Heart left ventricle (tissue), 16 donors: ENCODE measurements at regions of chr15 and their contacts with region 1.

Region 1: DNA sequence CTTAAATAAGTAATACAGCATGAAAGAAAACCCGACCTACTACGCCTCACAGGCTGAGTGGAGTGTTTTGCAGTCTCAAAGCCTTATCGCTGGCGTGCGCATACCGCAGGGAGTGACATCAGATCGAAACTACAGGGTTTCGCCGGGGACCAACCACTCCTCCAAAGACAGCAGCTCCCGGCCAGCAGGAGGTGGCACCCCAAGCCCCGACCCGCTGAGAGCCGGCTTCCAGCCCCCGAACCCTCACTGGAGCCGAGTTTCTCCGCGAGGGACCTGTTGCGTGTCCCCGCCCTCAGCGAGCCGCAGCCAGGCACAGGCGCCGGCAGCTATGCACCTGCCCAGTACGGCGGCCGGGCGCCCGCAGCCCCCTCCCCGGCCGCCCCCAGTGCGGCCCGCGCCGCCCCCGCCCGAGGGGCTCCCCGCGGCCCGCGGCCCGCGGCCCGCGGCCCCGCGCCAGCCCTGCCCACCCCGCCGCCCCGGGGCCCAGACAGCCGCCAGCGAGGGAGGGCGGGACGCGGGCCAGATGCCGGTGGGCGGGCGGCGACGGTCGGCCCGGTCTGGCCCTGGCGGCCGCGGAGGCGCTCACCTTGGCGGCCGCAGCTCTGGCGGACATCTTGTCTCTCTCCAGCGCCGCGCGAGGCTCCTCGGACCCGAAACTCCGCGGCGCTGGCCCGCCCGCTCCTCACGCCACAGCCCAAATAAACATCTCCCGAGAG is 694 bp downstream of the TJP1 start:
- DNase-seq: peak; percentile 79 to 89 (median 81)
- ATAC-seq: peak; percentile 66 to 84 (median 70)
- H3K4me3 ChIP-seq: peak overlapping the region; percentile 60 to 97 (median 84)
- H3K27ac ChIP-seq: peak overlapping the region; percentile 97 to 100 (median 99)
- H3K4me1 ChIP-seq: peaks cover 2 to 46% (median 20%) of the 10 kb centered on the region in 12 donors
- H3K27me3 ChIP-seq: peaks cover 0 to 42% (median 0%) of the 10 kb centered on the region in 9 donors
- CTCF ChIP-seq: peak in 8 of 12 donors; percentile 10 to 50 (median 30)
- POLR2A ChIP-seq: peak in 1 of 2 donors; percentile 37

Region 2: GRCh38 chr15:29747837-29748417 is 73.6 kb before region 1 on chr15:
- intact Hi-C with region 1: loop called in 3 of 10 experiments (anchors 5 kb)
- DNase-seq: no peak
- ATAC-seq: no peak
- H3K4me3 ChIP-seq: no peak overlapping the region
- H3K27ac ChIP-seq: no peak overlapping the region
- H3K4me1 ChIP-seq: peaks cover 0 to 15% (median 6%) of the 10 kb centered on the region in 12 donors
- H3K27me3 ChIP-seq: no peaks in the 10 kb centered on the region
- CTCF ChIP-seq: peak in 11 of 12 donors; percentile 26 to 67 (median 50)
- POLR2A ChIP-seq: no peak

Region 3: GRCh38 chr15:29756358-29757267 is 65.0 kb before region 1 on chr15:
- intact Hi-C with region 1: loop called in 5 of 10 experiments (anchors 5 to 10 kb)
- DNase-seq: no peak
- ATAC-seq: peak in 3 of 4 donors; percentile 44 to 49 (median 45)
- H3K4me3 ChIP-seq: no peak overlapping the region
- H3K27ac ChIP-seq: peak overlapping the region in 5 of 12 donors; percentile 0 to 45 (median 11)
- H3K4me1 ChIP-seq: peaks cover 10 to 46% (median 27%) of the 10 kb centered on the region in 12 donors
- H3K27me3 ChIP-seq: no peaks in the 10 kb centered on the region
- CTCF ChIP-seq: no peak
- POLR2A ChIP-seq: no peak

Region 4: DNA sequence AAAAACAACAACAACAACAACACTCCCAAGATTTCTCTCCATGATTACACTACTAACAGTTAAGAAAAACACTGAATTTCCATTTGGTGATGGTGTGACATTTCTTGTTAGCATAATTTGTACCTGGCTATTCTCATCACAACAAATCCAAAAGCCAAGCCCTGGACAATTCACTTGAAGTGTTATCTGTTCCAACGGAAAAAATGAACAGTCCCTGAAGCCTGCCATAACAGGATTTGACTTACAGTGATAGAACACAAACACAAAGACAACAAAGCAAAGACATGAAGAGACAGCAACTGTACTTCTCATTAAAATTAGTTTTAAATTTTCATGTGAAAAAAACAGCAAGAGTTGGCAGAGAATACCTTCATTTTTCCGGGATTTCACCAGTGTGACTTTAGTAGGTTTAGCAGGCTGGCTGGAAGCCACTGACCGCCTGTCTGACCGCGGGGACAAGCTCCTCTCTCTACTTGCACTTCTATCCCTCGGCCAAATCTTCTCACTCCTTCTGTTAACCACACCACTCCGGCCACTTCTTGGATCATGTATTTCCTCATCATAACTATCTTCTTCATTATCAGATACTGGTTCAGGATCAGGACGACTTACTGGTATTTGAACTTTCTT is 55.6 kb before region 1 on chr15:
- intact Hi-C with region 1: loop called in 4 of 10 experiments (anchors 5 to 10 kb)
- DNase-seq: peak in 3 of 5 donors; percentile 25 to 34 (median 25)
- ATAC-seq: peak; percentile 33 to 86 (median 61)
- H3K4me3 ChIP-seq: no peak overlapping the region
- H3K27ac ChIP-seq: peak overlapping the region in 4 of 12 donors; percentile 13 to 42 (median 32)
- H3K4me1 ChIP-seq: peaks cover 0 to 38% (median 27%) of the 10 kb centered on the region in 12 donors
- H3K27me3 ChIP-seq: no peaks in the 10 kb centered on the region
- CTCF ChIP-seq: no peak
- POLR2A ChIP-seq: no peak

Region 5: DNA sequence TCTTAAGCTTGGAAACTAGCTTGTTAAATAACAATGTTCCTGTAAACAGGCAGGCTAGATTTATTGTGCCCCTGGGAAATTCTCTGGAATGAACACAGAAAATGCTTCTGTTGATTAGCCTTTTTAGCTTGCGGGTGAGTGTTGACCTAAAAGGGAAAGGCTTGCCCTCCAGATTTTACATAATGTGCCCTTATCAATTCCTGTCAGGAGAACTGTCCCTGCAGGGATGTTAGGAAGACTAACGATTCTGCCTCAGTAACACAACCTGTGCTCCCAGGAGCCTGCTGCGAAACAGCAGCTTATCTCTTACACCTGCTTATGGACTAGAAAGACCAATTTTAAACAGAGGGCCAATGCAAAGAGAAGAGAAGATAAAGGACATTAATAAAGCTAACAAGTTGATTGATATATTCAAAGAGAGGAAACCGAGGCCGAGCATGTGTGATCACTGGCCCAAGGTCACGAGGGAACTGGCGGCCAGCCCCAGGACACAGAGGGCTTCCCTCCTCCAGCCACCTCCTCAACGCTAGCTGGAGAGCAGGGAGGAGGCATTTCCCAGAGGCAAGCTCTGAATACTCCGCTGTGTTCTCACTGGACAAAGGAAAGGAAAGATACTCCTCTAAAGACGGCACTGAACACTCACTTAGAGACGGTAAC is 49.0 kb after region 1 on chr15:
- intact Hi-C with region 1: loop called in 5 of 10 experiments (anchors 2 to 5 kb)
- DNase-seq: peak in 4 of 5 donors; percentile 52 to 67 (median 58)
- ATAC-seq: peak; percentile 69 to 86 (median 74)
- H3K4me3 ChIP-seq: peak overlapping the region in 6 of 12 donors; percentile 3 to 32 (median 20)
- H3K27ac ChIP-seq: peak overlapping the region; percentile 56 to 89 (median 77)
- H3K4me1 ChIP-seq: peaks cover 0 to 48% (median 33%) of the 10 kb centered on the region in 12 donors
- H3K27me3 ChIP-seq: no peaks in the 10 kb centered on the region
- CTCF ChIP-seq: no peak
- POLR2A ChIP-seq: no peak

Region 6: DNA sequence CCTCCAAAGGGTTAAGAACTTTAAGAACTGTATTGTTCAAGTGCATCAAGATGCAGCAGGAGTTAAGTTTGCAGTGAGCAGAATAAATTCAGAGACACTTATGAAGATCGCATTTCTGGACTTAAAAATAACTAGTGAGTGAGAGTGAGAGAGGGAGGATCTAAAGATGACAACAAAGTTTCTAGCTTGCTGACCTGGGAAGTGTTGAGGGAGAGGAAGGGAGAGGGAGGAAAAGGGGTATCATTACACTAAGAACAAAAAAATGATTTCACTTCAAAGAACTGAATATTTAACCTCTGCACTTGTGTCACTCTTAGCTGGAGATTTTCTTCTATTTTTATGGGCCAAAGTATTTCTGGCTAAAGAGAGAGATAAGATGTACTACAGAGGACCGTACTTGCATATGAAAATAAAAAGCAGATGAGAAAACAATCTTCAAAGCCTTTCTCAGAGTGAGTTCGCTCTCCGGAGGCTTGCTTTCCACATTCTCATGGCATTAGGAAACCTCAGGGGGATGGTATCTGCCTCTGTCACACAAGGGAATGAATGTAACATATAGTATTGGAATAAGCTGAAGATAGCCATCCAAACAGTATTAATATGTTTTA is 92.1 kb after region 1 on chr15:
- intact Hi-C with region 1: loop called in 5 of 10 experiments (anchors 5 to 10 kb)
- DNase-seq: no peak
- ATAC-seq: peak; percentile 38 to 65 (median 50)
- H3K4me3 ChIP-seq: peak overlapping the region in 2 of 12 donors; percentile 2 to 8
- H3K27ac ChIP-seq: peak overlapping the region; percentile 11 to 81 (median 63)
- H3K4me1 ChIP-seq: peaks cover 0 to 56% (median 30%) of the 10 kb centered on the region in 12 donors
- H3K27me3 ChIP-seq: no peaks in the 10 kb centered on the region
- CTCF ChIP-seq: no peak
- POLR2A ChIP-seq: no peak

Region 7: GRCh38 chr15:29925227-29926082 is 103.9 kb after region 1 on chr15:
- intact Hi-C with region 1: loop called in 7 of 10 experiments (anchors 1 to 5 kb)
- DNase-seq: peak; percentile 81 to 85 (median 82)
- ATAC-seq: peak; percentile 95 to 98 (median 96)
- H3K4me3 ChIP-seq: no peak overlapping the region
- H3K27ac ChIP-seq: peak overlapping the region in 7 of 12 donors; percentile 1 to 58 (median 31)
- H3K4me1 ChIP-seq: peaks cover 0 to 22% (median 15%) of the 10 kb centered on the region in 12 donors
- H3K27me3 ChIP-seq: no peaks in the 10 kb centered on the region
- CTCF ChIP-seq: peak; percentile 77 to 96 (median 88)
- POLR2A ChIP-seq: no peak